Psoas muscle (tissue), 8 donors: ENCODE measurements at regions of chr12 and their contacts with region 1.

Region 1: GRCh38 chr12:111396726-111397445 is 8.8 kb upstream of the SH2B3 start:
- DNase-seq: peak; percentile 88 to 94
- ATAC-seq: peak; percentile 90 to 97 (median 94)
- H3K4me3 ChIP-seq: peak overlapping the region; percentile 58
- H3K27ac ChIP-seq: peak overlapping the region; percentile 63
- H3K4me1 ChIP-seq: peaks cover 6% of the 10 kb centered on the region
- H3K27me3 ChIP-seq: no peaks in the 10 kb centered on the region
- CTCF ChIP-seq: peak; percentile 99

Region 2: DNA sequence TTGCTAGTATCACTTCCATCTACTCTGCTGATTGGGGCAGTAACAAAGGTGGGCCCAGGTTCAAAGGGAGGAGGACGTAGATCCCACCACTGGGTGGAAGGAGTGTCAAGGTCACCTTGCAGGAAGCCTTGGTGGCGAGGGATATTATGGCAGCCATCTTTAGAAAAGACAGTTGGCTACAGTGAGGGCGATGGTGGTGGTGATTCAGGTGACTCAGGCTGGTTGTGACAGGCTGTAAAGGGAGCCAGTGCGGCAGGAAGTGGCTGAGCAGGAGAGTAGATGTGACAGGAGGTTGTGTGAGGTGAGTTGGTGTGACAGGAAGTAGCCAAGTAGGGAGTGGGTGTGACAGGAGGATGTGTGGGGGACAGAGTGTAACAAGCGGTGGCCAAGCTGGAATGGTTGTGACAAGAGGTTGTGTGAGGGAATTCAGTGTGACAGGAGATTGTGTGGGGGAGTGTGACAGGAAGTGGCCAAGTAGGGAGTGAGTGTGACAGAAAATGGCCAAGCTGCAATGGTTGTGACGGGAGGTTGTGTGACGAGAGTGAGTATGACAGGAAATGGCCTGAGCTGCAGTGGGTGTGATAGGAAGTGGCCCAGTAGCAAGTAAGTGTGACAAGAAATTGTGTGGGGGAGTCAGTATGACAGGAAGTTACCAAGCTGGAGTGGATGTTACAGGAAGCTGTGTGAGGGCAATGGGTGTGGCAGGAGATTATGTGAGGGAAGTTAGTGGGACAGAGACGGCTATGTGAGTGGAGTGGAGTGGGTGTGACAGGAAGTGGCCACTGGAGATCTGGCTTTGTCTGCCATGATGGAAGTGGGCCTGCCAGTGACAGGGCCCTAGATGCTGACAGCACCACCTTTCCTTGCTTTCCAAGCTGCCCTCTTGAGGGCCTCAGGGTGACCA is 340.0 kb before region 1 on chr12:
- intact Hi-C with region 1: no loop called
- DNase-seq: no peak
- ATAC-seq: peak in 1 of 4 donors; percentile 22
- H3K4me3 ChIP-seq: no peak overlapping the region
- H3K27ac ChIP-seq: no peak overlapping the region
- H3K4me1 ChIP-seq: no peaks in the 10 kb centered on the region
- H3K27me3 ChIP-seq: peaks cover 0 to 4% (median 0%) of the 10 kb centered on the region in 3 donors
- CTCF ChIP-seq: no peak

Region 3: GRCh38 chr12:111451649-111452129 is 54.8 kb after region 1 on chr12:
- intact Hi-C with region 1: loop called (anchors 1 to 2 kb)
- DNase-seq: no peak
- ATAC-seq: peak in 2 of 4 donors; percentile 27 to 59
- H3K4me3 ChIP-seq: no peak overlapping the region
- H3K27ac ChIP-seq: no peak overlapping the region
- H3K4me1 ChIP-seq: peaks cover 34% of the 10 kb centered on the region
- H3K27me3 ChIP-seq: no peaks in the 10 kb centered on the region
- CTCF ChIP-seq: peak; percentile 74

Region 4: DNA sequence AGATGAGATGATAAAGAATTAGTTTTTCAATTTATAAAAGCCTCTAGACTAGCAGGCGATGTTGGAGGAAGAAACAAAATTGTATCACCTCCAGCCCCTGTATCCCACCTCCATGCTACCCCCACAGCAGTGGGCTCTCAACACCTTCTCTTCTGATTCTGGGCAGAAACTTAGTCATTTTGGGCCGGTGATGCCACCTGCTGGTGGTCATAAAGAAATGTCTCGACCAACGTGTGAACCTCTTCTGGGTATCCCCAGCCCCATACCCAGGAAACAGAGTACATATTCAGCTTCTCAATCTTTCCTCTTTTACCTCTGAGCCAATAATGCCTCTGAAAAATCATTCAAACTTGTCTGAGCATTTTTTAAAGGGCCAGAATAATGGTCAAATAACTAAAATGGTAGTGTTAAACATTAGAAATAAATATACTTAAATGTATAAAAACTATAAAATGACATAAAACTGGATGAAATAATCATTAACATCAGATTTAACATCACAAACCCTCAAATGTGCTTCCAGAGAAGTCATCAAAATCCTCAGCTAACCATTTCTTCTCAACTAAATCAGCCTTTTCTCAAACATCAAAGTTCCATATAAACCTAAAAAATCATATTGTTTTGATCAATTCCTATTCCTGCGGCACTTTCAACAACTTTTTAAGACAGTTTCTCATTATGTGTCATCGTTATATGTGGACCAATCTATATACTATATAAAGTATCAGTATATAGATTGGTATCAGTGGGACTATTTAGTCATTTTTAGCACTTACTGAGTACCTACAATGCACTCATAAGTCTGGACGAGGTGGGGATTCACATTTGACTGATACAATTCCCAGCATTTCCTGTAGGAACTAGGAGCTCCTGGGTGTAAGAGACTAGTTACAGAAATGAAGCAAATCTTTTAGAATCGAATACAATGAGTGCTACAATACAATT is 132.8 kb after region 1 on chr12:
- intact Hi-C with region 1: loop called (anchors 2 to 10 kb)
- DNase-seq: peak in 1 of 2 donors; percentile 24
- ATAC-seq: peak in 3 of 4 donors; percentile 42 to 57 (median 52)
- H3K4me3 ChIP-seq: no peak overlapping the region
- H3K27ac ChIP-seq: no peak overlapping the region
- H3K4me1 ChIP-seq: no peaks in the 10 kb centered on the region
- H3K27me3 ChIP-seq: no peaks in the 10 kb centered on the region
- CTCF ChIP-seq: peak; percentile 63

Region 5: DNA sequence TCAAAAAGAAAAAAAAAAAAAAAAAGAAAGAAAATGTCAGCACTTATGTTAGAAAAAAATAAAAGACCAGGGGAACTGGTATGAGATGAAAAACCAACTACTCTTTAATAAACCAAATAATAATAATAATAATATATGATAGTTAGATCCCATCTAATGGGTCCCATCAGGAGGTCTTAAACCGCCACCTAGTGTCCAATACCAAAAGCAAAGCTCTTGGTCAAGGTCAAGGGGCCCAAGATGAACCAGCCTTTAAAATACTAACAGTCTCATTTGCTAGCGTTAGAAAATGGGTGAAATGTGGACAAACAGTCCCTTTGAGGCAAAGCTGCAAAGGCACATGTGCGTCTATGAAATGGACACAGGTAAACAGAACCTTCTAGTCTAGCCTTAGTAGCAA is 276.6 kb after region 1 on chr12:
- intact Hi-C with region 1: loop called in 1 of 2 experiments (anchors 10 kb)
- DNase-seq: no peak
- ATAC-seq: no peak
- H3K4me3 ChIP-seq: no peak overlapping the region
- H3K27ac ChIP-seq: no peak overlapping the region
- H3K4me1 ChIP-seq: no peaks in the 10 kb centered on the region
- H3K27me3 ChIP-seq: no peaks in the 10 kb centered on the region
- CTCF ChIP-seq: peak; percentile 38